Kidney (tissue), 22 donors: ENCODE measurements at regions of chr2 and their contacts with region 1.

Region 1: DNA sequence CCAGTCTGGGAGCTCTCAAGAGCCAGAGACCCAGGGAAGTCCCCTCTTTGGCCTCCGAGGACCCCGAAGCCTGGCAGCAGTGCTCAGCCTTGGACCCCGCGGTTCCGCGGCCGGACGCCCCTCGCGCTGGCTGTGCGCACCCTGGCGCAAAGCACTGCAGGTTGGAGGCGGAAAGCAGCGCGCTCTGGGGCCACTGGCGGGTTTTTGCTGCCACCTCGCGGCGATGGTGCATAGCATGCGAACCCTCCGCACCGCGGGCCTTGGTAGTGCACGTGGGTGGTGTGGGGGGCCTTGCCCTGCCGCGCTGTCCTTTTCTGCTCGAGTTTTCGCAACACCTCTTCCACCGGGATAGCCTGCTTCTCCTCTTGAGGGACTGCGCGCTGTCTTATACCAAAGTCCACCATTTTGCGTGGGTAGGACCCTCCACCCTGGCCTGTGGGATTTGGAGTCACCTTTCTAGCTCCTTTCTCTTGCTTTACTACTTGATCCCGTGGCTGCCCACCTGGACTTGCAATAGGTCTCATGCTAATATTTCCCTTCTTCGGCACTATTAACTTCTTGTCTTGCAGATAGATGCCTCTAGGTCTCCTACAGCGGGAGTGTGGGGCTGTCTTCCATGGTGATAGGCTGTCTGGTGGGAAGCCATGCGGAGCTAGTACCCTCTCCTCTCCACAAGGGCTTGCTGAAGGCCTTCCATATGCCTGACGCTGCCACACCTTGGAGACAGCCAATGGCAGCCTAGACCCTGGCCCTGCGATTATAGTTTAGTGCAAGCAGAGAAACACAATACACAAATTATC is 14.3 kb downstream of the SIX3 start:
- DNase-seq: peak; percentile 82 to 91 (median 85)
- H3K4me3 ChIP-seq: peak overlapping the region in 1 of 3 donors; percentile 48
- H3K27ac ChIP-seq: no peak overlapping the region
- H3K4me1 ChIP-seq: peaks cover 0 to 25% (median 5%) of the 10 kb centered on the region in 3 donors
- H3K27me3 ChIP-seq: peaks cover 45% of the 10 kb centered on the region
- CTCF ChIP-seq: peak; percentile 89

Region 2: GRCh38 chr2:44392338-44392943 is 563.4 kb before region 1 on chr2:
- intact Hi-C with region 1: loop called (anchors 10 kb)
- DNase-seq: peak in 3 of 5 donors; percentile 11 to 60 (median 23)
- H3K4me3 ChIP-seq: no peak overlapping the region
- H3K27ac ChIP-seq: no peak overlapping the region
- H3K4me1 ChIP-seq: no peaks in the 10 kb centered on the region
- H3K27me3 ChIP-seq: no peaks in the 10 kb centered on the region
- CTCF ChIP-seq: peak; percentile 39

Region 3: DNA sequence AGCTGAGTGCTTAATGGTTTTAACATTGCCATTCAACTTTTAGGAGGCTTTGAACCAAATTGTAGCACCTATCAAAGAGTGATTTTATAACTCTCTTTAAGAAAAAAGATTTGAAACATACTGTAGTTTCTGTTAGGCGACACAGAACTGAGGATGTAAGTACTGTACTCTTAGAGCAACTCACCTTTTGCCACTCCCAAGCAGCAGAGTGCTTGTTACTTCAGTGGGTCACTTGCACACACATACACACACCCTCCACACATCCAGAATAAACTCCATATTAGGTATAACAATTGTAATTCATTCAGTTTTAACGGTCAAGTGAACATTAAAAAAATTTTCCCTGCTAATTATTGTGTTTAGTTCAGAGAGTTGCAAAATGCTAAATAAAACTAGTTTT is 475.7 kb before region 1 on chr2:
- intact Hi-C with region 1: loop called (anchors 10 kb)
- DNase-seq: no peak
- H3K4me3 ChIP-seq: no peak overlapping the region
- H3K27ac ChIP-seq: no peak overlapping the region
- H3K4me1 ChIP-seq: no peaks in the 10 kb centered on the region
- H3K27me3 ChIP-seq: no peaks in the 10 kb centered on the region
- CTCF ChIP-seq: no peak